Heart left ventricle (tissue), 16 donors: ENCODE measurements at regions of chr17 and their contacts with region 1.

Region 1: DNA sequence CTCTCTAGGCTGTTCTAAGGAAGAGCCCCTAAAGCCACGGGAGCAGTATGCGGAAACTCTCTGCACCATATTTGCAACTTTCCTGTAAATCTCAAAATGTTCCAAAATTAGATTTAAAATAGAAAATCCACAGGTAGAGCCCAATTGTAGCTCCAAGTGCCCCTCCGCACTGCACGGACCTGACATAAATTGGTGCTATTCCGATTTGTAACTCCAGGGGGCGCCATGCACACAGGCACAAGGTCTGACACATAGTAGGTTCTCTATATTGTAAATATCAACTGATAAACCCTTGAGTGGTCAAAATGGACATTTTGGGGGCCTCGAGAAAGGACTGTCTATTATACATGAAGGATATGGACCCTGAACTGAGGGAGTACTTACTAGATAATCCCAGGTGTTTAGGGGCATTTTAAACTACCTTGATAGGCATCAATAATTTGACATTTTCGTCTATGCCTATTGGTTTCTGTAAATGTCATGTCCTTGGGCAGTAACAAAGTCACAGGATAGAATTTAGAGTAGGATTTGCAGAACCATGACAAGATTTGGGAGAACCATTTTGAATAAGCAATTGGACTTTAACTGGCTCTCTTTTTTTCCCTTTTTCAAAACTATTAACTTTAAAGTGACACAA is 36.6 kb upstream of the TMEM132E start:
- DNase-seq: peak in 1 of 5 donors; percentile 44
- ATAC-seq: no peak
- H3K4me3 ChIP-seq: no peak overlapping the region
- H3K27ac ChIP-seq: no peak overlapping the region
- H3K4me1 ChIP-seq: no peaks in the 10 kb centered on the region
- H3K27me3 ChIP-seq: peaks cover 0 to 58% (median 15%) of the 10 kb centered on the region in 9 donors
- CTCF ChIP-seq: peak; percentile 63 to 91 (median 79)
- POLR2A ChIP-seq: no peak

Region 2: DNA sequence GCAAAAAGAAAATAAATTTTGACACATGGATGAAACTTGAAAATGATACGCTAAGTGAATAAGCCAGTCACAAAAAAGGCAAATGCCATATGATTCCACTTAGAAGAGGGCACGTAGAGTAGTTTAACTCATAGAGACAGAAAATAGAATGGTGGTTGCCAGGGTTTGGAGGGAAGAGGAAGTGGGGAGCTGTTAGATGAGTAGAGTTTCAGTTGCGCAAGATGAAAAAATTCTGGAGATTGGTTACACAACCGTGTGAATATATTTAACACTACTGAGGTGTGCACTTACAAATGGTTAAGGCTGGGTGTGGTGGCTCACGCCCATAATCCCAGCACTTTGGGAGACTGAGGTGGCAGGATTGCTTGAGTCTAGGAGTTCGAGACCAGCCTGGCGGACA is 56.8 kb before region 1 on chr17:
- intact Hi-C with region 1: no loop called
- DNase-seq: no peak
- ATAC-seq: no peak
- H3K4me3 ChIP-seq: no peak overlapping the region
- H3K27ac ChIP-seq: no peak overlapping the region
- H3K4me1 ChIP-seq: peaks cover 0 to 10% (median 0%) of the 10 kb centered on the region in 12 donors
- H3K27me3 ChIP-seq: peaks cover 0 to 69% (median 25%) of the 10 kb centered on the region in 9 donors
- CTCF ChIP-seq: no peak
- POLR2A ChIP-seq: no peak

Region 3: DNA sequence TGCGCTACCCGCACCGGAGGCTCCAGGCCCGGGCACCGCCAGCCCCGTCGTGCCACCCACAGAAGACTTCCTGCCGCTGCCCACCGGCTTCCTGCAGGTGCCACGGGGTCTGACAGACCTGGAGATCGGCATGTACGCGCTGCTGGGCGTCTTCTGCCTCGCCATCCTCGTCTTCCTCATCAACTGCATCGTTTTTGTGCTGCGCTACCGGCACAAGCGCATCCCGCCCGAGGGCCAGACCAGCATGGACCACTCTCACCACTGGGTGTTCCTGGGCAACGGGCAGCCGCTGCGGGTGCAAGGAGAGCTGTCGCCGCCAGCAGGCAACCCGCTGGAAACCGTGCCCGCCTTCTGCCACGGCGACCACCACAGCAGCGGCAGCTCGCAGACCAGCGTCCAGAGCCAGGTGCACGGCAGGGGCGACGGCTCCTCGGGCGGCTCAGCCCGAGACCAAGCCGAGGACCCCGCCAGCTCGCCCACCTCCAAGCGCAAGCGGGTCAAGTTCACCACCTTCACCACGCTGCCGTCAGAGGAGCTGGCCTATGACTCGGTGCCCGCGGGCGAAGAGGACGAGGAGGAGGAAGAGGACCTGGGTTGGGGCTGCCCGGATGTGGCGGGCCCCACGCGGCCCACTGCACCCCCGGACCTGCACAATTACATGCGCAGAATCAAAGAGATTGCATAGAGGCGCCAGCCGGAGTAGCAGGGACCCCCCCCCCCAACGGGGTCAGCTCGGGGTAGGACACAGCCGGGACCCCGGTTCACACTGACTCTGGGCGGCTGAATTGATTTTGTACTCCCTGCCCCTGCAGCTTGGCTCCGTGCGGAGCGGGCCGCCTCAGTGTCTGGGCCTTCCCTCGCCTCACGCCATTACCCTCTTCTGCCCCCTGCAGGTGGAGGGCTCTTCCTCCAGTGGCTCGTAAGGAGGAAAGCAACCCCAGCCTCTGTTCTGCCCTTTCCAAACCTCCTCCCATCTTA is 95.0 kb after region 1 on chr17:
- intact Hi-C with region 1: loop called in 9 of 10 experiments (anchors 2 to 10 kb)
- DNase-seq: peak; percentile 70 to 87 (median 75)
- ATAC-seq: peak; percentile 77 to 97 (median 92)
- H3K4me3 ChIP-seq: peak overlapping the region; percentile 21 to 57 (median 44)
- H3K27ac ChIP-seq: no peak overlapping the region
- H3K4me1 ChIP-seq: peaks cover 0 to 12% (median 5%) of the 10 kb centered on the region in 12 donors
- H3K27me3 ChIP-seq: peaks cover 0 to 72% (median 21%) of the 10 kb centered on the region in 9 donors
- CTCF ChIP-seq: peak; percentile 68 to 90 (median 78)
- POLR2A ChIP-seq: no peak

Region 4: DNA sequence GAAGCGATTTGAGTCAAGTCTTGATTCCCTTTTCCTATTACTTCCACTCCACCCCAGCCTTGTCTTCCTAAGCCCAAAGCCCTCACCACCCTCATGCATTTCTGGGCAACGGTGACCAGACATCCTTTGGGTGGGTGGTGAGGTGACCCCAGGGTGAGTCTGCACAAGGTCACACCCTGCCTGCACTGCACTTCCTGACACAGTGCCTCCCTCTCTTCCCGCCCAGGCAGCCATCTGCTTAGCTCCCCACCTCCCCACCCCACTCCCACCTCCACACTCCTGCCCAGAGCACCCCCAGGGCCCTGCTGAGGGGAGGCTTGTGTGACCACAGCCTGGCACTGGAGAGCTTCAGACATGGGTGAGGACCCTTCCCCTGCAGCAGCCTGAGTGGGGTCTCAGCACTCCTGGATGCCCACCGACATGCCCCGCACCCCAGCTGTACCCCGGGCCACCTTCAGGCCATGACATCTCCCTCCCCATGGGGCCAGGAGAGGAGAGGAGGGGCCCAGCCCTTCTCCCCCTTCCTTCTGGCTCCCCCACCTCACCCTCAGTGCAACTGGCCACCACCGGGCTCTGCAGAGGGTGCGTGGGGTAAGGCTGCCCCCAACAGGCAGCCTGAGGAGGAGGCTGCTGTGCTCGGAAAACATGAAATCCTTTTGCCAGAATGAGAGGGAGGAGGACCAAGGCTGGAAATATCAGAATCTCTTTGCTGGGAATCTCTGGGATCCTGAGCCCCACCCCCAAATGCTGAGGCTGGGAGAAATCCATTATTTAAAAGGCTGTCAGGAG is 349.8 kb after region 1 on chr17:
- intact Hi-C with region 1: loop called in 7 of 10 experiments (anchors 5 to 10 kb)
- DNase-seq: no peak
- ATAC-seq: peak in 3 of 4 donors; percentile 55 to 64 (median 61)
- H3K4me3 ChIP-seq: no peak overlapping the region
- H3K27ac ChIP-seq: no peak overlapping the region
- H3K4me1 ChIP-seq: no peaks in the 10 kb centered on the region
- H3K27me3 ChIP-seq: peaks cover 0 to 74% (median 16%) of the 10 kb centered on the region in 9 donors
- CTCF ChIP-seq: peak in 11 of 12 donors; percentile 11 to 57 (median 41)
- POLR2A ChIP-seq: no peak

Region 5: DNA sequence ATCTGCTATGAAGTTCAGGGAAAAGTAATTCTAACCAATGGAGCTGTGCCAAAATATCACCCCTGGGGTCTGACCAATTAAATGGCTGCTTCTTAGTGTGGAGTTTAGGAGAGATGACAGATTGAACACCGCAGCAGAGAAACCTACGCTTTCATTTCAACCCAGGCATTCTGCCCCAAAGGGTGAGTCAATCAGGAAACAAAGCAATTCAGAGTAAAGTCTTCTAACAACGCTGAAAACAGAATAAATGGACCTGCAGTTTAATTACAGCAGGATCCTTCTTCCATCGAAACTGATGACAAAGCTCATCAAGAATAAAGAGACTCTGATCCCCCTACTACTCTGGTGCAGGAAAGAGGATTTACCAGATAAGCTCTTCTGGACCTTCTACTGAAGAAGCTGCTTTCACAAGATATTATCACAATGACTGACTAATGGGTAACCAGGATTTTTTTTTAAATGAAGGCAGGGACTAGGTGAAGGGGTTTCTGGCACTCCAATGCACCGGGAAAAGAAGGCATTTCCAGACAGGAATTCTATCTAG is 504.0 kb after region 1 on chr17:
- intact Hi-C with region 1: loop called in 1 of 10 experiments (anchors 5 kb)
- DNase-seq: no peak
- ATAC-seq: no peak
- H3K4me3 ChIP-seq: peak overlapping the region in 1 of 12 donors; percentile 15
- H3K27ac ChIP-seq: peak overlapping the region in 1 of 12 donors; percentile 67
- H3K4me1 ChIP-seq: peaks cover 0 to 51% (median 10%) of the 10 kb centered on the region in 12 donors
- H3K27me3 ChIP-seq: no peaks in the 10 kb centered on the region
- CTCF ChIP-seq: no peak
- POLR2A ChIP-seq: no peak

Region 6: DNA sequence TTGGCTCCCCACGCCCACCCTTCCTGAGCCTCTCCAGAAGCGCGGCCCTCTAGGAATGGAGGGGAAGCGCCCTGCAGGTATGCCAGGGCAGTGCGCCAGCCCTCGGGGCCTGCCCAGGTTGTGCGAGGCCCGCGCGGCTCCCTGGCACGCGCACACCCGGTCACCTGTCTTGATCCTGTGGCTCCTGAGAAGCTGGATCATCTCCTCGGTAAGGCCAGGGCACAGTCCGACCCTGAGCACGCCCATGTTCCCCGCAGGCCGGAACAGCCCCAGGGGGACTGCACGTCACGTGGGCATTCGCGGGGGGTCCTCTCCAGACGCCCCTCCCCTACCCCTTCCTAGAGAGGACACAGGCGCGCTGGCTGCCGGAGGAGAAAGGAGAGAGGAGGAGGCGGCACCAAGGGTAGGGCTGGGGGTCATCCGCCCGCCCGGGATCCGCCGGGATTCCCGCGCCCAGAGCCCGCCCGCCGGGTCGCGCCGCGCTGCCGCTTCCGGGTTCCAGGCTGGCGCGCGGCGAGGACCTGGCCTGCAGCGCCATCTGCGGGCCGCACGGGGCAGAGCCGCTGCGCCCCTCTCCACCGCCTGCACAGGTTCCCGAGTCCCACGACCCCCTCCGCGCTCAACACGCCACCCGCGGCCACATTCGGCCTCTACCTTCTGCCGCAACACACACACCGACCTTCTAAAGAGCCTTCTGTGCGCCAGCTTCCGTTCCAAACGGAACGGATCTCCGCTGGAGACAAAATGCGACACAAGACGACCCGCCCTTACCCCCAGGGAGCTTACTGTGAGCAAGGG is 576.7 kb after region 1 on chr17 and contains the start of gene RAD51D:
- intact Hi-C with region 1: loop called (anchors 1 to 5 kb)
- DNase-seq: peak; percentile 67 to 88 (median 73)
- ATAC-seq: peak; percentile 62 to 98 (median 95)
- H3K4me3 ChIP-seq: peak within 1 kb of the TSS; percentile 51 to 99 (median 90)
- H3K27ac ChIP-seq: peak within 1 kb of the TSS in 11 of 12 donors; percentile 8 to 86 (median 75)
- H3K4me1 ChIP-seq: peaks cover 0 to 20% (median 10%) of the 10 kb centered on the region in 12 donors
- H3K27me3 ChIP-seq: no peaks in the 10 kb centered on the region
- CTCF ChIP-seq: peak; percentile 67 to 98 (median 94)
- POLR2A ChIP-seq: peak in 1 of 2 donors; percentile 39
- total RNA-seq, gene RAD51D: 2.7 to 9.2 (median 5.0) TPM

Region 7: DNA sequence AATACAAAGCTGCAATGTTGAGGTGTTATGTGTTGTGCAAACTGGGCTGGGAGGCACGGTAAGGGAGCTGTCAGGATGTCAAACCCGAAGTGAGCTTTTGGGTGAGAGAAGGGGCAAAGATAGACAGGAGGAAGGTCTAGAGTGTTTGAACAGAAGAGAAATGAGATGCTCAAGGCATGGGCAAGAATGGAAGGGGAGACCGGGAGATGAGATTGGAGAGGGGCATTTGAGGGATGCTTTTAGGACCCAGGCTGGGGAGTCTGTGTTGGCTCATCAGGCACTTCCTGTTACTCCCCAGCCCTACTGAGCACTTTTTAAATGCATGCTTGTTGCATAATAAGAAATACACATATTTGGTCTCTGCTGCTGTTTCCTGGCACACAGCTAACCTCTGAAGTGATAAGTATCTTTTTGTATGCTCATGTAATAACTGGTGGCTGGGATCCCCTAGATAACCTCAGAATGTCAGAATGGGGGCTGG is 618.5 kb after region 1 on chr17:
- intact Hi-C with region 1: no loop called
- DNase-seq: no peak
- ATAC-seq: peak in 1 of 4 donors; percentile 18
- H3K4me3 ChIP-seq: no peak overlapping the region
- H3K27ac ChIP-seq: peak overlapping the region in 1 of 12 donors; percentile 70
- H3K4me1 ChIP-seq: peaks cover 0 to 17% (median 0%) of the 10 kb centered on the region in 12 donors
- H3K27me3 ChIP-seq: no peaks in the 10 kb centered on the region
- CTCF ChIP-seq: no peak
- POLR2A ChIP-seq: no peak